ENCODE measurements at regions of chr1 and their contacts with region 1.

Region 1: GRCh38 chr1:175319418-175320230 is 127.0 kb upstream of the KIAA0040 start:
- DNase-seq: peak; percentile 90
- H3K4me3 ChIP-seq: no peak overlapping the region
- H3K27ac ChIP-seq: peak overlapping the region; percentile 39 to 63 (median 58)
- H3K4me1 ChIP-seq: peaks cover 0 to 15% (median 13%) of the 10 kb centered on the region in 4 donors
- H3K27me3 ChIP-seq: no peaks in the 10 kb centered on the region
- CTCF ChIP-seq: peak; percentile 41 to 81 (median 74)
- EP300 ChIP-seq: no peak
- POLR2A ChIP-seq: no peak

Region 2: GRCh38 chr1:175023043-175023921 is 296.3 kb before region 1 on chr1 and contains the start of gene MRPS14:
- intact Hi-C with region 1: loop called (anchors 2 kb)
- DNase-seq: peak; percentile 99
- H3K4me3 ChIP-seq: peak within 1 kb of the TSS; percentile 81 to 90 (median 87)
- H3K27ac ChIP-seq: peak within 1 kb of the TSS; percentile 81 to 86 (median 85)
- H3K4me1 ChIP-seq: peaks cover 0 to 14% (median 10%) of the 10 kb centered on the region in 4 donors
- H3K27me3 ChIP-seq: no peaks in the 10 kb centered on the region
- CTCF ChIP-seq: no peak
- EP300 ChIP-seq: no peak
- POLR2A ChIP-seq: peak; percentile 58 to 63
- total RNA-seq, gene MRPS14: 17.5 to 36.0 (median 24.3) TPM

Region 3: DNA sequence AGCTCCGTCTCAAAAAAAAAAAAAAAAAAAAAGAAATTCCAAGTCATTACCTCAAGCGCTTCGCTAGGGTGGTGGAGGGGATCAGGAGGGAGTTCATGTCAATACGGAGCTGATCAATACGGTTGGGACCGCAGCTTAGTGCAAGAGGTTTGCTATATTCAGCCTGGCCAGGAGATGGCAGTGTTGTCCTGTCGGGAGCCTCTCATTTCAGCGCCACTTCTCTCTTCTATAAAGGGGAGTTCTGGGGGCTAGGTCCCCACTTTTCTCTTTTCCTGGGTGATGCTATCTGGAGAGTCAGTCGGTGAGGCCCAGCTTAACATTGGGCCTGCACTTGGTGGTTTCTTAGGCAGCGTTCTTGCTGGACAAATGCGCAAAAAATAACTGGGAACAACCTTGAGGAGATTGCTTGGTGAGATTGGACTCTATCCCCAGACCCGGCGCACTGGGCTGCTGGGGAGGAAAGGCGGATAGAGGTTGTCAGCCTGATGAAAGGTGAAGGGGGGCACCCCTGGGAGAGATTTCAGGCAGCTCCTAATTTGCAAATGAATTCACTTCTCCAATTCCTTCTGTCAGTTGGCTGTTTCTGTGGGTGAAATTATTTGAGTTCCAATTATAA is 167.5 kb before region 1 on chr1:
- intact Hi-C with region 1: loop called (anchors 1 kb)
- DNase-seq: peak; percentile 77
- H3K4me3 ChIP-seq: no peak overlapping the region
- H3K27ac ChIP-seq: no peak overlapping the region
- H3K4me1 ChIP-seq: peaks cover 0 to 14% (median 10%) of the 10 kb centered on the region in 4 donors
- H3K27me3 ChIP-seq: no peaks in the 10 kb centered on the region
- CTCF ChIP-seq: peak; percentile 15 to 84 (median 67)
- EP300 ChIP-seq: no peak
- POLR2A ChIP-seq: no peak

Region 4: DNA sequence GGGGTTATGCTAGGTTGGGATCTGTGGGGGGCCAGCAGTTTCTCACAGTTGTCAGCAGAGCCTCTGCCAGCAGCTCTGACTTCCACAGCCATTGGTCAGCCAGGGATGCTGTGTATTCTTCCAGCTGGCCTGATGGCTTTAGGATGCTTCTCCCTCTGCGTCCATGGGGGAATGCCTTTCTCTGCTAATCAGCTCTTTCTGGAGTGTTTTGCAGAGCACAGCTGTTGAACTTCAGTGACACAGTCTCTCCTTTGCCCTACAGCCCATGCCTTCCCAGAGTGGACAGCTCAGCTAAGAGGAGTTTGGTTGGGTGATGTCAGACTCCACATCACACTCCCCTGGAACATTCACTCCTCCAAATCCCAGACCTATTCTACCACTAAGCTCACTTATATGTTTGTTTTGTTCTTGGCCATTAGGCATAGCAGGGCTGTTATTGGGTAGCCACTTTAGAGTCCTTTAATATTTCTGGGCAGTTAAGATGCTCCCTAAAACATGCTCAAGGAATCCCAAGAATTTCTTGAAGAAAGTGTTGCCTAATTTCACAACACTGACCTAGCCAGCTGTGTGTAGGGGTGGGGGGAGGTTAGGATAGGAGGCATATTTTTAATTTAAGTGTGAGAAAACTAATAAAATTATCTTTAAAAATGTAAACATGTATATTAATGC is 51.8 kb before region 1 on chr1:
- intact Hi-C with region 1: loop called (anchors 5 kb)
- DNase-seq: peak; percentile 91
- H3K4me3 ChIP-seq: no peak overlapping the region
- H3K27ac ChIP-seq: peak overlapping the region; percentile 40 to 49 (median 48)
- H3K4me1 ChIP-seq: peaks cover 0 to 5% (median 0%) of the 10 kb centered on the region in 4 donors
- H3K27me3 ChIP-seq: no peaks in the 10 kb centered on the region
- CTCF ChIP-seq: no peak
- EP300 ChIP-seq: no peak
- POLR2A ChIP-seq: no peak